ENCODE measurements at regions of chr11 and their contacts with region 1.

Region 1: DNA sequence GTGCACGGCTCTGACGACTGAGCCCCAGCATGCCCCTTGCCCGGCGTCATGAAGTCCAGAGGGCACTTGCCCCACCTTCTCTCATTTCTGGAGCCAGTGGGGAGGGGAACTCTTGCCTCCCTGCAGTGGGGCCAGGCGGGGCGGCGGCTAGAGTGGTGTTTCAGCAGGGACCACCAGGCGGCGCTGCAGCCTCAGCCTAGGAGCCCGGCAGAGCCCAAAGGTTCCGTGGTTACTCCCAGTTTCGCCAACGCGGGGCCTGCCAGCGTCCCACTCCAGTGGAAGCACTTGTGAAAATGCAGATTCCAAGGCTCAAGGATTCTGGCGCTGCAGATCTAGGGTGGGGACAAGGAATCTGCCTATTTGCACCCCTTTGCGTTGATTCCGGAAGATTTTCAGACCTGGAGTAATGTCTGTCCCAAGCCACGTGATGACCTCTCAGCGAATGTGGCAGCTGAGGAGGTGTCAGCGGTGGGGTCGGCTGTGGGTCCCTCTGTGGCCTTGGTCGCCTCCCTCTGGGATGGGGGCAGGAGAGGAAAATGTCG is 55.7 kb downstream of the CD82 start:
- DNase-seq: peak; percentile 26 to 69 (median 51)
- ATAC-seq: peak; percentile 60
- H3K4me3 ChIP-seq: no peak overlapping the region
- H3K4me3 Mint-ChIP-seq: no peak overlapping the region
- H3K27ac ChIP-seq: no peak overlapping the region
- H3K27ac Mint-ChIP-seq: no peak overlapping the region
- H3K4me1 ChIP-seq: peaks cover 18% of the 10 kb centered on the region
- H3K4me1 Mint-ChIP-seq: peaks cover 15% of the 10 kb centered on the region
- H3K27me3 ChIP-seq: no peaks in the 10 kb centered on the region
- H3K27me3 Mint-ChIP-seq: no peaks in the 10 kb centered on the region
- CTCF ChIP-seq: peak; percentile 56

Region 2: GRCh38 chr11:44110231-44110679 is 511.0 kb before region 1 on chr11:
- CTCF ChIA-PET with region 1: no interaction called
- POLR2A ChIA-PET with region 1: no interaction called
- intact Hi-C with region 1: loop called in 1 of 2 experiments (anchors 5 kb)
- DNase-seq: peak; percentile 25 to 73 (median 54)
- ATAC-seq: peak; percentile 94
- H3K4me3 ChIP-seq: no peak overlapping the region
- H3K4me3 Mint-ChIP-seq: no peak overlapping the region
- H3K27ac ChIP-seq: no peak overlapping the region
- H3K27ac Mint-ChIP-seq: no peak overlapping the region
- H3K4me1 ChIP-seq: peaks cover 5% of the 10 kb centered on the region
- H3K4me1 Mint-ChIP-seq: peaks cover 8% of the 10 kb centered on the region
- H3K27me3 ChIP-seq: no peaks in the 10 kb centered on the region
- H3K27me3 Mint-ChIP-seq: no peaks in the 10 kb centered on the region
- CTCF ChIP-seq: peak; percentile 81

Region 3: GRCh38 chr11:44556735-44557409 is 64.3 kb before region 1 on chr11:
- CTCF ChIA-PET with region 1: interaction called, 625 read pairs
- POLR2A ChIA-PET with region 1: interaction called, 3 read pairs
- intact Hi-C with region 1: loop called (anchors 1 kb)
- DNase-seq: peak; percentile 43 to 79 (median 70)
- ATAC-seq: peak; percentile 71
- H3K4me3 ChIP-seq: no peak overlapping the region
- H3K4me3 Mint-ChIP-seq: no peak overlapping the region
- H3K27ac ChIP-seq: no peak overlapping the region
- H3K27ac Mint-ChIP-seq: no peak overlapping the region
- H3K4me1 ChIP-seq: peaks cover 11% of the 10 kb centered on the region
- H3K4me1 Mint-ChIP-seq: peaks cover 11% of the 10 kb centered on the region
- H3K27me3 ChIP-seq: no peaks in the 10 kb centered on the region
- H3K27me3 Mint-ChIP-seq: no peaks in the 10 kb centered on the region
- CTCF ChIP-seq: peak; percentile 76

Region 4: DNA sequence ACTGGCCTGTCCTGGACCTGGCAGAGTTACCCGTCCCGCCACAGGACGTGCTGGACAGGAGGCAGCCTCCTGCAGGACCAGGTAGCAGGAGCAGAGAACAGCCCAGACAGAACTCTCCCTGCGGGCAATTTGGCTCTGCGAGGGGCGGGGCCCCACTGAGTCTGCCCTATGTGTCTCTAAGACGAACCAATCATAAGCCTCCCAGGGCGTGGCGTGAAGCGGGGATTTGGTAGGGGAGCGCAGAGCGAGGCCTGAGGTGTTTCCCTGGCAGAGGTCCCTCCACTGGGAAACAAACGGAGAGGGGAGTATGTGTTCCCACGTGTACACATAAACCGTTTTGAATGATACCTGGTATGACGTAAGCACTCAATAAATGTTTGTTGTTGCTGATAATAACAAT is 48.3 kb before region 1 on chr11:
- CTCF ChIA-PET with region 1: interaction called, 21 read pairs
- POLR2A ChIA-PET with region 1: no interaction called
- intact Hi-C with region 1: no loop called
- DNase-seq: no peak
- ATAC-seq: no peak
- H3K4me3 ChIP-seq: no peak overlapping the region
- H3K4me3 Mint-ChIP-seq: no peak overlapping the region
- H3K27ac ChIP-seq: no peak overlapping the region
- H3K27ac Mint-ChIP-seq: peak overlapping the region; percentile 82
- H3K4me1 ChIP-seq: peaks cover 58% of the 10 kb centered on the region
- H3K4me1 Mint-ChIP-seq: peaks cover 86% of the 10 kb centered on the region
- H3K27me3 ChIP-seq: no peaks in the 10 kb centered on the region
- H3K27me3 Mint-ChIP-seq: no peaks in the 10 kb centered on the region
- CTCF ChIP-seq: no peak

Region 5: DNA sequence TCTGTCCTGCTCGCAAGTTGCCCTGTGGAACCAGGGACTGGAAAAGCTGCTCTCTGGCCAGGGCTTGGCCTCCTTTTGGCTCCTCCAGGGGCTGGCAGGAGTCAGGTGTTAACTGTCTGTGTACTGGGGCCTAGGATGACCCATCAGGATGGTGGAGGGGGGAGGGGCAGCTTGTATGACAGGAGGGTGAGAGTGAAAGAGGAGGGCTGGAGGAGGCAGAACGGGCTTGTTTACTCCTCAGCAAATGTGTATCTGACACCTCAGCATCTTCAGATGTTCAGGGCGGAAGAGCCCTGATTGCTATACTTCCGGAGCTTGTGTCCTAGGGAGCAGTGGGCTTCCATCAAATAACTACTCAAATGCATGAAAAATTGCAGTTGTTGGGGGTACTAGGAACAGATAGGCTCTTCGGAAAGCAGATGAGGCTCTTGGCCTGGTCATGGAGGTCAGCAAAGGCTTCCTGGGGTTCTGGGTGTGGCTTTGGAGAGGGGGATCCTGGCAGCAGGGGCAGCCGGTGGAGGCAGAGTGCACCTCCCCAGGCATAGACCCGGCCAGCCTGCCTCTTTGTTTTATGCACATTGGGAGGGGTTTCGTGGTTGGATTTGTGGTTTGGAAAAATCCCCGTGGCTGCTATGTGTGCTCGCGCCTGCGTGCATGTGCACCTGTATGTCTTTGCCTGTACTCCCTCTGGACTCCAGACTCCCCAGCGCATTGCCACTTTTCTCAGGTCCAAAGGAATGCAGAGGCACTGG is 24.5 kb before region 1 on chr11:
- CTCF ChIA-PET with region 1: interaction called, 15 read pairs
- POLR2A ChIA-PET with region 1: no interaction called
- intact Hi-C with region 1: no loop called
- DNase-seq: peak; percentile 25 to 88 (median 58)
- ATAC-seq: peak; percentile 83
- H3K4me3 ChIP-seq: peak overlapping the region; percentile 7 to 14
- H3K4me3 Mint-ChIP-seq: peak overlapping the region; percentile 61
- H3K27ac ChIP-seq: peak overlapping the region; percentile 25 to 55
- H3K27ac Mint-ChIP-seq: peak overlapping the region; percentile 93
- H3K4me1 ChIP-seq: peaks cover 31% of the 10 kb centered on the region
- H3K4me1 Mint-ChIP-seq: peaks cover 40% of the 10 kb centered on the region
- H3K27me3 ChIP-seq: no peaks in the 10 kb centered on the region
- H3K27me3 Mint-ChIP-seq: no peaks in the 10 kb centered on the region
- CTCF ChIP-seq: no peak

Region 6: GRCh38 chr11:44775366-44775984 is 154.3 kb after region 1 on chr11:
- CTCF ChIA-PET with region 1: interaction called, 8 read pairs
- POLR2A ChIA-PET with region 1: no interaction called
- intact Hi-C with region 1: loop called (anchors 1 kb)
- DNase-seq: peak; percentile 10 to 73 (median 52)
- ATAC-seq: peak; percentile 49
- H3K4me3 ChIP-seq: no peak overlapping the region
- H3K4me3 Mint-ChIP-seq: no peak overlapping the region
- H3K27ac ChIP-seq: no peak overlapping the region
- H3K27ac Mint-ChIP-seq: no peak overlapping the region
- H3K4me1 ChIP-seq: no peaks in the 10 kb centered on the region
- H3K4me1 Mint-ChIP-seq: peaks cover 5% of the 10 kb centered on the region
- H3K27me3 ChIP-seq: no peaks in the 10 kb centered on the region
- H3K27me3 Mint-ChIP-seq: no peaks in the 10 kb centered on the region
- CTCF ChIP-seq: peak; percentile 76

Region 7: DNA sequence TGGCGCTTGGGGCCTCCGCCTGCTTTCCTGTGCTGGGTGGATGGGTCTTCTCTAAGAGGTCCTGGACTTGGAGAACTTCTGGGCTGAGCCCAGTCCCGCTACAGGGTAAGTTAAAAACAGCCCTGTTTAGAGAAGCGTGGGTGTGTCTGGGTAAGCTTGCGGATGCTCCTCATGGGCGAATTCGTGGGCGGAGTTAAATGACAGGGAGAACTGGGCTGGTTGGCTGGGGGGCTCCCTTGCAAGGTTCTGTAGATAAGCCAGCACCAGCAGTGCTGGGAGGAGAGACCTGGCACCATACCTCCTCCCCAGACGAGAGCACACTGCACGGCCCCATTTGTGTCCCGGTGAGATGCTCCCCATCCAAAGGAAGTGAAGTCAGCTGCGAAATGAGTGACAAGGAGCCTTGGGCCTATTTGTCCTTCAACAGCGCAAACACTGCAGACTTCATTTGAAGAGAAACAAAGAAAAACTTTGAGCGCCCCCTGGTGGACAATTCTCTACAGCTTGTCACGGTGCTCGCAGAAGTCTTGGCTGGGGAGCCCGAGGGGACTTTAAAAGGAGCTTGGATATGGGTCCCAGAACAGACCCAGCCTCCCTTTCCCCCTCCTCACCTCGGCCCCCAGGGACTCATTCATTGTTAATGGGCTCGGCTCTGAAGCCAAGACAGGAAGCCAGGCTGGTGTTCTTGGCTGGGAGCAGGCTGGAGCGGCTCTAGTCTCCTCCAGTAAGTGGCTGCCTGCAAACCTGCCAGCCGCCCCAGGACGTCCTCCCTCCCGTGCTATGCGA is 290.0 kb after region 1 on chr11:
- CTCF ChIA-PET with region 1: interaction called, 26 read pairs
- POLR2A ChIA-PET with region 1: interaction called, 4 read pairs
- intact Hi-C with region 1: loop called in 1 of 2 experiments (anchors 1 kb)
- DNase-seq: peak; percentile 62 to 90 (median 82)
- ATAC-seq: peak; percentile 64
- H3K4me3 ChIP-seq: no peak overlapping the region
- H3K4me3 Mint-ChIP-seq: no peak overlapping the region
- H3K27ac ChIP-seq: no peak overlapping the region
- H3K27ac Mint-ChIP-seq: no peak overlapping the region
- H3K4me1 ChIP-seq: no peaks in the 10 kb centered on the region
- H3K4me1 Mint-ChIP-seq: peaks cover 3% of the 10 kb centered on the region
- H3K27me3 ChIP-seq: no peaks in the 10 kb centered on the region
- H3K27me3 Mint-ChIP-seq: no peaks in the 10 kb centered on the region
- CTCF ChIP-seq: peak; percentile 61

Measured in CD8-positive, alpha-beta T cell (primary cell).